ENCODE measurements at regions of chr10 and their contacts with region 1.

Region 1: GRCh38 chr10:93138113-93138870 is 64.6 kb downstream of the CYP26A1 start:
- DNase-seq: no peak
- H3K4me3 ChIP-seq: no peak overlapping the region
- H3K27ac ChIP-seq: no peak overlapping the region
- H3K4me1 ChIP-seq: no peaks in the 10 kb centered on the region
- H3K27me3 ChIP-seq: no peaks in the 10 kb centered on the region
- CTCF ChIP-seq: no peak
- EP300 ChIP-seq: no peak
- POLR2A ChIP-seq: no peak
- RAD21 ChIP-seq: no peak

Region 2: DNA sequence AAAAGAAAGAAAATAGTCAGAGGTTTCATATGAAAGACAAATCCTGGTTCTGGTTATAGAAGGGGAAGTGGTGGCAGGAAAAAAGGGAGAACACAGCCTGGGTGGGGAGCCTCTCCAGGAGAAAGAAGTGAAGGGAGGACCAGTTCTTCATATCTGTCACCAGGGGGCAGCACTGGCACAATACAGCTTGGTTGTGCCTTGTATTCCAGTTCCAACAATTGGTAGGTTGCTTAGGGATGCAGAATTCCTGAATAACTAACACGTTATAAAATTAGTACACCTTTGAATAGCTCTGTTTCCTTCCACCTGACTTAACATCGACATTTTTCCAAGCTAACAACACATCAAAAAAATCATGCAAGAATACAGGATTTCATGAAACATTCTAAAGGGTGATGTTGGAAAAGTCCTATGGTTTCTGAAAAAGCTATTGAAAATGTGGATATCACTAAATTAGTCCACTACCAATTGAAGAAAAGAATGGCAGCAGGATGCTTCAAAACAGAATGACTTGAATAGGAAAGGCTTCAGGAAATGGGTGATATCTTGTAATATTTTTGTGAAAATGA is 11.7 kb before region 1 on chr10:
- CTCF ChIA-PET with region 1: interaction called, 22 read pairs
- POLR2A ChIA-PET with region 1: interaction called, 5 read pairs
- DNase-seq: peak in 1 of 2 experiments; percentile 62
- H3K4me3 ChIP-seq: no peak overlapping the region
- H3K27ac ChIP-seq: no peak overlapping the region
- H3K4me1 ChIP-seq: no peaks in the 10 kb centered on the region
- H3K27me3 ChIP-seq: no peaks in the 10 kb centered on the region
- CTCF ChIP-seq: peak; percentile 43 to 80 (median 55); a peak in 3 of 4 replicates
- EP300 ChIP-seq: no peak
- POLR2A ChIP-seq: no peak
- RAD21 ChIP-seq: peak; percentile 62 to 69

Region 3: DNA sequence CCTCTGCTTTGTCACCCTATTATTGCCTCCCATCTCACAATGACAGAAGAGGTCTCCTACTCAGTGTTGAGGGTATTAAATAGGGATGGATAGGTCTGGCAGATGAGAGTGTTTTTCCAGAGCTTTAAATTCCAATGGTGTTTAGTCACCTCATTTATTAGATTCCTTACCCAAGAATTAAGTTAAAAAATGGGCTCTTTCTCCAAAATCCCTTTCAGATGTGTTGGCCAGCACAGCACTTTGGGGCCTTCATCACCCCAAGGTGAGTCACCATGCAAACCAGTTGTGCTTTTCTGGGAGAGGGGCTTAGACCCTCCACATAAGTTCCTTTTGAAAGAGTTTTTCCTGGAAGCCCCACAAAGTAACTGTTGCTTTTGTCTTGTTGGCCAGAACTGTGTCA is 13.8 kb after region 1 on chr10:
- CTCF ChIA-PET with region 1: interaction called, 10 read pairs
- POLR2A ChIA-PET with region 1: no interaction called
- DNase-seq: no peak
- H3K4me3 ChIP-seq: no peak overlapping the region
- H3K27ac ChIP-seq: no peak overlapping the region
- H3K4me1 ChIP-seq: peaks cover 0 to 3% (median 0%) of the 10 kb centered on the region in 4 experiments; a peak in 1 of 7 replicates
- H3K27me3 ChIP-seq: no peaks in the 10 kb centered on the region
- CTCF ChIP-seq: no peak
- EP300 ChIP-seq: no peak
- POLR2A ChIP-seq: no peak
- RAD21 ChIP-seq: no peak

Region 4: GRCh38 chr10:93165367-93165766 is 27.1 kb after region 1 on chr10:
- CTCF ChIA-PET with region 1: no interaction called
- POLR2A ChIA-PET with region 1: no interaction called
- DNase-seq: no peak
- H3K4me3 ChIP-seq: no peak overlapping the region
- H3K27ac ChIP-seq: no peak overlapping the region
- H3K4me1 ChIP-seq: no peaks in the 10 kb centered on the region; a peak in 2 of 7 replicates
- H3K27me3 ChIP-seq: no peaks in the 10 kb centered on the region
- CTCF ChIP-seq: no peak
- EP300 ChIP-seq: no peak
- POLR2A ChIP-seq: no peak
- RAD21 ChIP-seq: no peak

Region 5: GRCh38 chr10:93208716-93209464 is 70.6 kb after region 1 on chr10:
- CTCF ChIA-PET with region 1: no interaction called
- POLR2A ChIA-PET with region 1: no interaction called
- DNase-seq: no peak
- H3K4me3 ChIP-seq: no peak overlapping the region
- H3K27ac ChIP-seq: no peak overlapping the region
- H3K4me1 ChIP-seq: no peaks in the 10 kb centered on the region; a peak in 1 of 7 replicates
- H3K27me3 ChIP-seq: no peaks in the 10 kb centered on the region
- CTCF ChIP-seq: no peak
- EP300 ChIP-seq: no peak
- POLR2A ChIP-seq: no peak
- RAD21 ChIP-seq: no peak